Psoas muscle (tissue), 8 donors: ENCODE measurements at regions of chr9 and their contacts with region 1.

Region 1: DNA sequence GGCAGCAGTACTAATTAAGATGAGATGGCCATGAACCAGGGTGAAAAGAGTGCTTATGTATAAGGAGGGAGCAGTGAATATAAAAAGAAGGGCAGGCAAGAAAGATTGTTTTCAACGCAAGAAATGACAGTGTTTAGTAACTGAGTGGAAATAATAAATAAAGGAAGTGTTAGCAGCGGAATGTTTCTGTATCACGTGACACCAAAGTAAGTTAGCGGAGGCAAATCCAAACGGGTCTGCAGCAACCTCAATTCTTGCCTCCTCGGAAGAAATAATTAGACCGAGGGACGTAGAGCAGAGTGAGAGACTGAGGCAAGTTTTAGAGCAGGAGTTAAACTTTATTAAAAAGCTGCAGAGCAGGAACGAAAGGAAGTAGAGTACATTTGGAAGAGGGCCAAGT is 15.4 kb upstream of the GAS1 start:
- DNase-seq: no peak
- ATAC-seq: no peak
- H3K4me3 ChIP-seq: no peak overlapping the region
- H3K27ac ChIP-seq: no peak overlapping the region
- H3K4me1 ChIP-seq: no peaks in the 10 kb centered on the region
- H3K27me3 ChIP-seq: peaks cover 0 to 7% (median 0%) of the 10 kb centered on the region in 3 donors
- CTCF ChIP-seq: no peak

Region 2: DNA sequence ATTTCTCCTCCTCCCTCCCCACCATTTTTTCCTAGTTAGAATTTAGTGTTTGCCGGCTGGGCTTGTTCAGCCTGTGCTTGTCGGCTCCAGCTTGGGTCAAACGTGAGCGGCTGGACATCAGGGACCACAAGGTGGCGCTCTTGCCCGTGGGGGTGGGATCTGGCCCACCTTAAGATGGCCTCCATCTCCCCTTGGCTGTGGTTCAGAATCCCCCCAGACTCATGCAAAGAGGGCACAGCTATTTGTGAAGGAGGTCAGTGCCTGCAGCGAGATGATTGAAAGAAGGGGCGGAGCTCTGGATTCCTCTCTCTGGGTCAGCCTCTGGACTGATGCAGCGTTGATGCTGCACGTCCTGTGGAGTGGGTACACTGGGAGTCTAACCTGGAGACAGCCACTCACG is 325.2 kb before region 1 on chr9:
- intact Hi-C with region 1: no loop called
- DNase-seq: peak in 1 of 2 donors; percentile 54
- ATAC-seq: peak in 1 of 4 donors; percentile 43
- H3K4me3 ChIP-seq: no peak overlapping the region
- H3K27ac ChIP-seq: no peak overlapping the region
- H3K4me1 ChIP-seq: no peaks in the 10 kb centered on the region
- H3K27me3 ChIP-seq: peaks cover 0 to 3% (median 0%) of the 10 kb centered on the region in 3 donors
- CTCF ChIP-seq: peak; percentile 12

Region 3: DNA sequence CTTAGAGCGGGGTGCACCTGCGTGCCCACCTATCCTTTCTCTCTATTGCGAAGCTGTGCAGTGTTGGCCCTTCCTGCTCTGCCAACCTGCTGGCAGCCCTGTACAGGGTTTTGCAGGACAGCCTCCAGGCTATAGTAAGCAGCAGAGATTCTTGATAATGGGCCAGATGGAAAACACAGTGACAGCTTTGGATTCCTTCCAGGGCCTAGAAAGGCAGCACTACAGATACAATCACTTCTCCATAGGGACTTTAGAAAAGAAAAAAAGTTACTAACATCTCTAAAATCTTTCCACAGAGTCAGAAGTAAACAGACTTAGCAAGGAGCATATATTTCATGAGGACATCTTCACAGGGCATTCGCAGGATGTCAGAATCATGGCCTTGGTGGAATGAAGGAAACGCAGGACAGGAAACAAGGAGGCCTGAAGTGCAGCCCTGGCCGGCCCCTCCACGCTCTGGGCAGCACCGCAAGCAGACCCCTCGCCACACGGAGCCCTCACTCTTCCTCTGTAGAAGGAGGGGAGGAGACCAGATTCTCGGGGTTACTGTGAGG is 156.7 kb after region 1 on chr9:
- intact Hi-C with region 1: loop called in 1 of 2 experiments (anchors 5 kb)
- DNase-seq: peak in 1 of 2 donors; percentile 46
- ATAC-seq: peak; percentile 52 to 78 (median 75)
- H3K4me3 ChIP-seq: no peak overlapping the region
- H3K27ac ChIP-seq: peak overlapping the region; percentile 39
- H3K4me1 ChIP-seq: peaks cover 32% of the 10 kb centered on the region
- H3K27me3 ChIP-seq: no peaks in the 10 kb centered on the region
- CTCF ChIP-seq: no peak

Region 4: DNA sequence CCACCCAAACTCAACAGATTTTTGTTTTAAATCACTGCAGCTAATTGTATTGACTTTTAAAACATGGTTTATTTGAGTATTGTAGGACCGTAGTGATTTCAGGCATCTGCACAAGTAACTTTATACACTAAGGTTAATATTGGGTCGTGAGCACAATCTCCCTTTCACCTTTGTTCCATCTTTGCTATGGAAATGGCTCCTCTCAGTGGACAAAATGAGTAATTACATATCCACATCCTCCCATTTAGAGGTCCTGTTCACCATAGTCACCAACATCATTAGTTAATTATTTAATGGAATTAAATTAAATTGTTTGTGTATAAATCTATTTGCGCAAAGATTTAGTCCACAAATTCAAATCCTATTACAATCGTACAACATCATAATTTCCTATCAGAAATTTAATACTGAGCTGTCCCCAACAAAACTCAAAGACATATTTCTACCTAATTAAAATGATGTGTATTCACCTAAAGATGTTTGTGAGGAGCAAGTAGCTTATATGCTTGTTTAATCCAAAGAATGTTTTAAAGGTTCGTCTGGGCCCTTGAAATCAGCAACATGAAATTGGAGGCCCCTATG is 362.0 kb after region 1 on chr9:
- intact Hi-C with region 1: no loop called
- DNase-seq: no peak
- ATAC-seq: peak; percentile 62 to 89 (median 76)
- H3K4me3 ChIP-seq: no peak overlapping the region
- H3K27ac ChIP-seq: no peak overlapping the region
- H3K4me1 ChIP-seq: no peaks in the 10 kb centered on the region
- H3K27me3 ChIP-seq: no peaks in the 10 kb centered on the region
- CTCF ChIP-seq: peak; percentile 89